A673 (cell line): ENCODE measurements at regions of chr6 and their contacts with region 1.

Region 1: GRCh38 chr6:141634269-141634668 is 498.5 kb upstream of the GJE1 start:
- DNase-seq: no peak
- H3K4me3 ChIP-seq: no peak overlapping the region
- H3K27ac ChIP-seq: peak overlapping the region; percentile 100
- H3K4me1 ChIP-seq: peaks cover 48% of the 10 kb centered on the region
- H3K27me3 ChIP-seq: no peaks in the 10 kb centered on the region
- CTCF ChIP-seq: no peak

Region 2: DNA sequence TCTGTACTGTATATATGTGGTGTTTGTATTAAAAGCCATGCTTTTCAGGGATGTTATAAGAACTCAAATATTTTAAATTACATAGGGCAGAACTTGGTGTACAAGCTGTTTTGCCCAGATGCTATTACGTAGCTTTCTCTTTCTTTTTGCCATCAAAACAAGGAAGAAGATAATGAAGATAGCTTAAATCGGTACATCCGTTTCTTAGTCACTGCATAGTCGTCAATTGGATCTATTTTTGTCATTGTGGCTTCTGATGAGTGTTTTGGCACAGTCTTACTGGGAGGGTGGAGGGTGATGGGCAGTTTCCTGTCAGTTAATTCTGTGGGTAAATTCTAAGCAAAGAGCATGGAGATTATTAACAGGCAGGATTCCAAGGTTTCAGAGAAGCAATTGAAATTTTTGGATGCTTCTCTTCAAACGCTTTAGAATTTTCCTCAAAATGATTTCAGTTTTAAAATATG is 150.6 kb before region 1 on chr6:
- CTCF ChIA-PET with region 1: no interaction called
- POLR2A ChIA-PET with region 1: no interaction called
- intact Hi-C with region 1: no loop called
- DNase-seq: peak; percentile 93
- H3K4me3 ChIP-seq: peak overlapping the region; percentile 23
- H3K27ac ChIP-seq: peak overlapping the region; percentile 78
- H3K4me1 ChIP-seq: peaks cover 25% of the 10 kb centered on the region
- H3K27me3 ChIP-seq: no peaks in the 10 kb centered on the region
- CTCF ChIP-seq: no peak

Region 3: GRCh38 chr6:141677598-141678211 is 43.4 kb after region 1 on chr6:
- CTCF ChIA-PET with region 1: no interaction called
- POLR2A ChIA-PET with region 1: no interaction called
- intact Hi-C with region 1: loop called (anchors 5 kb)
- DNase-seq: peak; percentile 76
- H3K4me3 ChIP-seq: no peak overlapping the region
- H3K27ac ChIP-seq: no peak overlapping the region
- H3K4me1 ChIP-seq: peaks cover 22% of the 10 kb centered on the region
- H3K27me3 ChIP-seq: no peaks in the 10 kb centered on the region
- CTCF ChIP-seq: peak; percentile 72